ENCODE measurements at regions of chr4 and their contacts with region 1.

Region 1: GRCh38 chr4:108141213-108141950 is 27.4 kb downstream of the LEF1 start:
- DNase-seq: peak in 3 of 9 experiments; percentile 33 to 45 (median 38)
- ATAC-seq: peak; percentile 6
- H3K4me3 ChIP-seq: peak overlapping the region in 1 of 2 experiments; percentile 10
- H3K4me3 Mint-ChIP-seq: peak overlapping the region; percentile 73
- H3K27ac ChIP-seq: peak overlapping the region; percentile 7 to 9
- H3K27ac Mint-ChIP-seq: peak overlapping the region; percentile 94
- H3K4me1 ChIP-seq: peaks cover 99% of the 10 kb centered on the region
- H3K4me1 Mint-ChIP-seq: peaks cover 90% of the 10 kb centered on the region
- H3K27me3 ChIP-seq: no peaks in the 10 kb centered on the region
- H3K27me3 Mint-ChIP-seq: no peaks in the 10 kb centered on the region
- CTCF ChIP-seq: no peak

Region 2: DNA sequence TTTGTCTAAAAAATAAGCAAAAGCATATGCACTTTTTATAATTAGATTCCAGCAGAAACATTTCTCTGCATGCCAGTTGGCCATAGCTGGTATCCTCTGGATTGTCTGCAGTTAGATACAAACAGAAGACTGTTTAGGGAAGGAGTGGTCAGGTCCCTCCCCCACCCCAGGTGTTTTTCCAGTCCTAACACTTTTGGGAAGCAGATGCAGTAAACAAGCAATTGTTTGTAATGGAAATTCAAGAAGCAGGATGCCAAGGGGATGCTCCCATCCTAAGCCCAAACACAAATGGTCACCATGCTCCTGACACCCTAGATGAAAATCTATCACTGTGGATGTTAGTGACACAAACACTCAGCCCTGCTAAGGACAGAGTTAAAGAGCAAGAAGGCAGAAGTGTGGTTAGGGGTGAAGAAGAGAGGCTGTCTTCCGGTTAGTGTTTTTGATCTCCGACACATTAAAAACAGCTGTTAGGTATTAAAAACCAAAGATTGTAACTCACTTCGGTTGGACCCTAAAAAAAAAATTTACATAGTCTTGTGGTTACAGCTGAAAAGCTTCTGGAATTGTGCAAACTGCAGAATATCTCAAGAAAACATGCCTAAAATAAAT is 19.5 kb after region 1 on chr4:
- CTCF ChIA-PET with region 1: interaction called, 5 read pairs
- POLR2A ChIA-PET with region 1: interaction called, 5 read pairs
- intact Hi-C with region 1: loop called in 1 of 2 experiments (anchors 2 kb)
- DNase-seq: peak in 2 of 9 experiments; percentile 40 to 65
- ATAC-seq: peak; percentile 40
- H3K4me3 ChIP-seq: peak overlapping the region; percentile 73 to 78
- H3K4me3 Mint-ChIP-seq: peak overlapping the region; percentile 83
- H3K27ac ChIP-seq: peak overlapping the region in 1 of 2 experiments; percentile 28
- H3K27ac Mint-ChIP-seq: peak overlapping the region; percentile 91
- H3K4me1 ChIP-seq: peaks cover 37% of the 10 kb centered on the region
- H3K4me1 Mint-ChIP-seq: peaks cover 71% of the 10 kb centered on the region
- H3K27me3 ChIP-seq: peaks cover 0 to 8% of the 10 kb centered on the region in 2 experiments
- H3K27me3 Mint-ChIP-seq: no peaks in the 10 kb centered on the region
- CTCF ChIP-seq: no peak

Region 3: GRCh38 chr4:108181704-108182103 is 40.3 kb after region 1 on chr4:
- CTCF ChIA-PET with region 1: no interaction called
- POLR2A ChIA-PET with region 1: no interaction called
- intact Hi-C with region 1: no loop called
- DNase-seq: peak in 2 of 9 experiments; percentile 39 to 47
- ATAC-seq: no peak
- H3K4me3 ChIP-seq: no peak overlapping the region
- H3K4me3 Mint-ChIP-seq: no peak overlapping the region
- H3K27ac ChIP-seq: no peak overlapping the region
- H3K27ac Mint-ChIP-seq: no peak overlapping the region
- H3K4me1 ChIP-seq: no peaks in the 10 kb centered on the region
- H3K4me1 Mint-ChIP-seq: peaks cover 24% of the 10 kb centered on the region
- H3K27me3 ChIP-seq: peaks cover 0 to 5% of the 10 kb centered on the region in 2 experiments
- H3K27me3 Mint-ChIP-seq: no peaks in the 10 kb centered on the region
- CTCF ChIP-seq: peak; percentile 26

Measured in CD8-positive, alpha-beta T cell (primary cell).